ENCODE measurements at regions of chr5 and their contacts with region 1.

Region 1: GRCh38 chr5:151771259-151772028 is at the start of gene G3BP1:
- DNase-seq: peak; percentile 97 to 100 (median 99)
- ATAC-seq: peak; percentile 76
- H3K4me3 ChIP-seq: peak within 1 kb of the TSS; percentile 88
- H3K4me3 Mint-ChIP-seq: peak within 1 kb of the TSS; percentile 90
- H3K27ac ChIP-seq: peak within 1 kb of the TSS; percentile 86 to 90
- H3K27ac Mint-ChIP-seq: no peak within 1 kb of the TSS
- H3K4me1 ChIP-seq: peaks cover 31% of the 10 kb centered on the region
- H3K4me1 Mint-ChIP-seq: peaks cover 47% of the 10 kb centered on the region
- H3K27me3 ChIP-seq: no peaks in the 10 kb centered on the region
- H3K27me3 Mint-ChIP-seq: no peaks in the 10 kb centered on the region
- CTCF ChIP-seq: peak; percentile 45
- total RNA-seq, gene G3BP1: 82.3 to 83.9 TPM

Region 2: GRCh38 chr5:150409638-150410523 is 1361.6 kb before region 1 on chr5:
- CTCF ChIA-PET with region 1: no interaction called
- POLR2A ChIA-PET with region 1: interaction called, 6 read pairs
- intact Hi-C with region 1: loop called in 1 of 2 experiments (anchors 2 kb)
- DNase-seq: peak in 10 of 14 experiments; percentile 16 to 77 (median 38)
- ATAC-seq: no peak
- H3K4me3 ChIP-seq: peak overlapping the region; percentile 97
- H3K4me3 Mint-ChIP-seq: peak overlapping the region; percentile 99
- H3K27ac ChIP-seq: peak overlapping the region; percentile 94 to 98
- H3K27ac Mint-ChIP-seq: peak overlapping the region; percentile 98
- H3K4me1 ChIP-seq: peaks cover 65% of the 10 kb centered on the region
- H3K4me1 Mint-ChIP-seq: peaks cover 40% of the 10 kb centered on the region
- H3K27me3 ChIP-seq: no peaks in the 10 kb centered on the region
- H3K27me3 Mint-ChIP-seq: no peaks in the 10 kb centered on the region
- CTCF ChIP-seq: no peak

Region 3: GRCh38 chr5:151223469-151224264 is 547.8 kb before region 1 on chr5 and contains the start of gene CCDC69:
- CTCF ChIA-PET with region 1: no interaction called
- POLR2A ChIA-PET with region 1: no interaction called
- intact Hi-C with region 1: loop called in 1 of 2 experiments (anchors 10 kb)
- DNase-seq: peak in 12 of 14 experiments; percentile 16 to 73 (median 50)
- ATAC-seq: peak; percentile 40
- H3K4me3 ChIP-seq: peak within 1 kb of the TSS; percentile 98
- H3K4me3 Mint-ChIP-seq: peak within 1 kb of the TSS; percentile 92
- H3K27ac ChIP-seq: peak within 1 kb of the TSS; percentile 92 to 94
- H3K27ac Mint-ChIP-seq: peak within 1 kb of the TSS; percentile 94
- H3K4me1 ChIP-seq: peaks cover 64% of the 10 kb centered on the region
- H3K4me1 Mint-ChIP-seq: peaks cover 63% of the 10 kb centered on the region
- H3K27me3 ChIP-seq: no peaks in the 10 kb centered on the region
- H3K27me3 Mint-ChIP-seq: no peaks in the 10 kb centered on the region
- CTCF ChIP-seq: no peak
- total RNA-seq, gene CCDC69: 68.0 to 68.9 TPM

Region 4: GRCh38 chr5:151470439-151470838 is 301.0 kb before region 1 on chr5:
- CTCF ChIA-PET with region 1: no interaction called
- POLR2A ChIA-PET with region 1: no interaction called
- intact Hi-C with region 1: no loop called
- DNase-seq: no peak
- ATAC-seq: no peak
- H3K4me3 ChIP-seq: no peak overlapping the region
- H3K4me3 Mint-ChIP-seq: no peak overlapping the region
- H3K27ac ChIP-seq: no peak overlapping the region
- H3K27ac Mint-ChIP-seq: no peak overlapping the region
- H3K4me1 ChIP-seq: no peaks in the 10 kb centered on the region
- H3K4me1 Mint-ChIP-seq: no peaks in the 10 kb centered on the region
- H3K27me3 ChIP-seq: no peaks in the 10 kb centered on the region
- H3K27me3 Mint-ChIP-seq: no peaks in the 10 kb centered on the region
- CTCF ChIP-seq: no peak

Region 5: DNA sequence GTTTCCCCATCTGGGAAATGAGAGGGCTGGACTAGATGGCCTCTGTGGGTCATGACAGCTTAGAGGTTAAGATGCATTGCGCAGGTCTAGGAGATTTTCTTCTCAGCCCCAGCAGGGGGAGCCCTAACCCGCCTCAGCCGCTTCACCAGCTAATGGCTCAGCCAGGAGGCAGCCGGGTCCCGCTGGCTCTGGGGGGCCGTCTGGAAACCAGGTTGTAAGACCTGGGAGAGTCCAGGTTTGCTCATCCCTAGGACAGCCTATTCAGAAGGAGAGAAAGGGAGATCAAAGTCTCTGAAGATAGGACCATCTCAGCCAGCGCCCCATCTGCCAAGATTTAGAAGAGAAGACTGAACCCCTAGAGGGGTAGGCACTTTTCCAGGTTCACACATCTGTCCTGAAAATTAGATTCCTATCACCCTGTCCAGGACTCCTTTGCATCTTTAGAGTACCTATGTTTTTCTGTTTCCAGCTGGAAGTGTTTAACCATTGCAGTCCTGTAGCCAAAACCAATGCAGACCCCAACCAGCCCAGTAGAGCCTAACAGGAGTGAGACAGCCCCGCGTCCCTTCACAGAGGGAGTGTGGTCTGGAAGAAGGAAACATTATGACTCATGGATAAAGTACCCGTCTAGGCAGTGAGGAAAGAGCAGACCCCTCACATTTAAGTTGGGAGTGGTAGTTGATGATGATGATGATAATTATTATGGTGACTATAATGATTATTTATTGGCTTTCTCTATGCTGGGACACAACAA is 112.3 kb before region 1 on chr5:
- CTCF ChIA-PET with region 1: interaction called, 20 read pairs
- POLR2A ChIA-PET with region 1: interaction called, 15 read pairs
- intact Hi-C with region 1: loop called (anchors 2 to 10 kb)
- DNase-seq: peak; percentile 63 to 88 (median 72)
- ATAC-seq: peak; percentile 92
- H3K4me3 ChIP-seq: no peak overlapping the region
- H3K4me3 Mint-ChIP-seq: no peak overlapping the region
- H3K27ac ChIP-seq: no peak overlapping the region
- H3K27ac Mint-ChIP-seq: no peak overlapping the region
- H3K4me1 ChIP-seq: peaks cover 5% of the 10 kb centered on the region
- H3K4me1 Mint-ChIP-seq: peaks cover 14% of the 10 kb centered on the region
- H3K27me3 ChIP-seq: peaks cover 2 to 3% of the 10 kb centered on the region in 2 experiments
- H3K27me3 Mint-ChIP-seq: peaks cover 18% of the 10 kb centered on the region
- CTCF ChIP-seq: peak; percentile 88

Region 6: DNA sequence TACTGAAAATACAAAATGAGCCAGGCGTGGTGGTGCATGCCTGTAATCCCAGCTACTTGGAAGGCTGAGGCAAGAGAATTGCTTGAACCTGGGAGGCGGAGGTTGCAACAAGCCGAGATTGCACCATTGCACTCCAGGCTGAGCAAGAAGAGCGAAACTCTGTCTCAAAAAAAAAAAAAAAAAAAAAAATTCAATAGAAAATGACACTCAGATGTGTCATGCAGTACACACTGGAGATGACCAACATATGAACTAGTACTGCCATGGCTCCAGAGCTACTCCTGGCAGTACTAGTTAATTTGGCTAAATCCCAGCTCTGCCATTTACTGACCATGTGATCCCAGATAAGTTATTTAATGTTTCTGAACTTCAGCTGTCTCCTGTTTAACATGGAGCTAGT is 20.4 kb before region 1 on chr5:
- CTCF ChIA-PET with region 1: interaction called, 10 read pairs
- POLR2A ChIA-PET with region 1: interaction called, 160 read pairs
- intact Hi-C with region 1: no loop called
- DNase-seq: peak in 2 of 14 experiments; percentile 27 to 42
- ATAC-seq: no peak
- H3K4me3 ChIP-seq: no peak overlapping the region
- H3K4me3 Mint-ChIP-seq: no peak overlapping the region
- H3K27ac ChIP-seq: no peak overlapping the region
- H3K27ac Mint-ChIP-seq: no peak overlapping the region
- H3K4me1 ChIP-seq: peaks cover 38% of the 10 kb centered on the region
- H3K4me1 Mint-ChIP-seq: peaks cover 45% of the 10 kb centered on the region
- H3K27me3 ChIP-seq: no peaks in the 10 kb centered on the region
- H3K27me3 Mint-ChIP-seq: no peaks in the 10 kb centered on the region
- CTCF ChIP-seq: no peak

Region 7: GRCh38 chr5:151786468-151786867 is 15.0 kb after region 1 on chr5:
- CTCF ChIA-PET with region 1: interaction called, 4 read pairs
- POLR2A ChIA-PET with region 1: interaction called, 19 read pairs
- intact Hi-C with region 1: no loop called
- DNase-seq: no peak
- ATAC-seq: no peak
- H3K4me3 ChIP-seq: no peak overlapping the region
- H3K4me3 Mint-ChIP-seq: no peak overlapping the region
- H3K27ac ChIP-seq: no peak overlapping the region
- H3K27ac Mint-ChIP-seq: peak overlapping the region; percentile 80
- H3K4me1 ChIP-seq: peaks cover 14% of the 10 kb centered on the region
- H3K4me1 Mint-ChIP-seq: peaks cover 56% of the 10 kb centered on the region
- H3K27me3 ChIP-seq: no peaks in the 10 kb centered on the region
- H3K27me3 Mint-ChIP-seq: no peaks in the 10 kb centered on the region
- CTCF ChIP-seq: no peak

Measured in CD4-positive, alpha-beta T cell (primary cell).